MCF 10A (cell line): ENCODE measurements at regions of chr12 and their contacts with region 1.

Region 1: GRCh38 chr12:44930972-44931600 is 55.0 kb upstream of the NELL2 start:
- DNase-seq: peak; percentile 63
- H3K4me3 Mint-ChIP-seq: no peak overlapping the region
- H3K27ac Mint-ChIP-seq: no peak overlapping the region
- H3K4me1 Mint-ChIP-seq: no peaks in the 10 kb centered on the region
- H3K27me3 Mint-ChIP-seq: peaks cover 50% of the 10 kb centered on the region
- CTCF ChIP-seq: peak; percentile 52

Region 2: GRCh38 chr12:43957732-43958372 is 973.2 kb before region 1 on chr12:
- CTCF ChIA-PET with region 1: interaction called, 11 read pairs
- POLR2A ChIA-PET with region 1: no interaction called
- intact Hi-C with region 1: loop called (anchors 1 kb)
- DNase-seq: peak; percentile 66
- H3K4me3 Mint-ChIP-seq: no peak overlapping the region
- H3K27ac Mint-ChIP-seq: no peak overlapping the region
- H3K4me1 Mint-ChIP-seq: no peaks in the 10 kb centered on the region
- H3K27me3 Mint-ChIP-seq: no peaks in the 10 kb centered on the region
- CTCF ChIP-seq: peak; percentile 49

Region 3: GRCh38 chr12:44000309-44000952 is 930.7 kb before region 1 on chr12:
- CTCF ChIA-PET with region 1: interaction called, 4 read pairs
- POLR2A ChIA-PET with region 1: no interaction called
- intact Hi-C with region 1: loop called (anchors 1 kb)
- DNase-seq: peak; percentile 76
- H3K4me3 Mint-ChIP-seq: no peak overlapping the region
- H3K27ac Mint-ChIP-seq: no peak overlapping the region
- H3K4me1 Mint-ChIP-seq: no peaks in the 10 kb centered on the region
- H3K27me3 Mint-ChIP-seq: no peaks in the 10 kb centered on the region
- CTCF ChIP-seq: peak; percentile 43

Region 4: DNA sequence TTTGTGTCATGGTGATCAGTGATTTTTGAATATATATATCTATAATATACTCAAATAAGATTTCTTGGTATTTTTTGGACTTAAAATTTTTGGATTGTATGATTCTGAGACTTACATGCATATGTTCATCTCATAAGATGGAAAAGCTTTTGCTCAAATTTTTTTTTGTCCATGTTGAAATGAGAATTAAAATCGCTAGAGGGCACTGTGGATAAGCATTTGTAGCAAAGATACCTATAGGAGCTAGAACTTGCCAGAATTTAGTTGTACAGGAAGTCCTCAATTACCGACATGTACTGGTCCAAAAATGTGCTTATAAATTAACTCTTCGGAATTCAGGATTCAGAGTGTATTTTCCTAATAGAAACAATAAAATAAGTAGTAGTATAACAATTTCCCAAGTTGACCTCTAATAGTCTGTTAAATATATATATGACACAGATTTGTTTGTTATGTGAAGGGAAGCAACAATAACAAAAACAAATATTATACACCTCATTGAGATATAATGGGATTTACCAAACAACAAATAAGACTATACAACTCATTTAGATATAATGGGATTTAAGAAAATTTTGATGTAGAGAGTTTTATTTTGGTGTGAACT is 915.6 kb before region 1 on chr12:
- CTCF ChIA-PET with region 1: interaction called, 15 read pairs
- POLR2A ChIA-PET with region 1: interaction called, 3 read pairs
- intact Hi-C with region 1: loop called (anchors 1 kb)
- DNase-seq: peak; percentile 62
- H3K4me3 Mint-ChIP-seq: no peak overlapping the region
- H3K27ac Mint-ChIP-seq: no peak overlapping the region
- H3K4me1 Mint-ChIP-seq: no peaks in the 10 kb centered on the region
- H3K27me3 Mint-ChIP-seq: no peaks in the 10 kb centered on the region
- CTCF ChIP-seq: peak; percentile 51

Region 5: DNA sequence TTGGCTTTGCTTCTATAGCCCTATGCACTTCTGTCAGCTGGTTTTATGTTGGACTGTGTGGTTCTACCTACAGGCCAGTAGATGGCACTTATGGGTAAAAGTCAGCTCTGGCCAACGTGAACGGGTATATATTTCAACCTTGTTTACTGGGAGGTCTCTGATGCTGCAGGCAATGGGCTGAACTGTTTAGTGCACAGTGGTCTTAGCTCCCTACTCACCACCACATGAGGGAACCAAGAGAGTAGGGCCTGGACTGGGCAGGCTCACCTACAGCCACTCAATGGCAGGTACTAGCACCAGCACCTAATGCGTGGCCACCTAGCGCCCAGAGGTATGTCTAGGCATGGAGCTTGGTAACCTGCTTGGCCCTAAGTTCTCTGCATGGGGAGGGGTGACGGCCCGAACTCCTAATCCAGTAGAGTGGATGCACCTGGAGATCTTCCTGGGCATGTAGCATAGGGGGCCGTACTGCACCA is 613.4 kb before region 1 on chr12:
- CTCF ChIA-PET with region 1: no interaction called
- POLR2A ChIA-PET with region 1: no interaction called
- intact Hi-C with region 1: loop called (anchors 1 kb)
- DNase-seq: peak; percentile 44
- H3K4me3 Mint-ChIP-seq: no peak overlapping the region
- H3K27ac Mint-ChIP-seq: no peak overlapping the region
- H3K4me1 Mint-ChIP-seq: no peaks in the 10 kb centered on the region
- H3K27me3 Mint-ChIP-seq: no peaks in the 10 kb centered on the region
- CTCF ChIP-seq: peak; percentile 27

Region 6: GRCh38 chr12:44774815-44775411 is 156.2 kb before region 1 on chr12:
- CTCF ChIA-PET with region 1: interaction called, 3 read pairs
- POLR2A ChIA-PET with region 1: no interaction called
- intact Hi-C with region 1: loop called (anchors 1 kb)
- DNase-seq: peak; percentile 52
- H3K4me3 Mint-ChIP-seq: no peak overlapping the region
- H3K27ac Mint-ChIP-seq: no peak overlapping the region
- H3K4me1 Mint-ChIP-seq: no peaks in the 10 kb centered on the region
- H3K27me3 Mint-ChIP-seq: peaks cover 58% of the 10 kb centered on the region
- CTCF ChIP-seq: peak; percentile 70

Region 7: GRCh38 chr12:44847403-44847802 is 83.7 kb before region 1 on chr12:
- CTCF ChIA-PET with region 1: no interaction called
- POLR2A ChIA-PET with region 1: no interaction called
- intact Hi-C with region 1: no loop called
- DNase-seq: no peak
- H3K4me3 Mint-ChIP-seq: no peak overlapping the region
- H3K27ac Mint-ChIP-seq: no peak overlapping the region
- H3K4me1 Mint-ChIP-seq: no peaks in the 10 kb centered on the region
- H3K27me3 Mint-ChIP-seq: peaks cover 80% of the 10 kb centered on the region
- CTCF ChIP-seq: no peak